ENCODE measurements at regions of chr17 and their contacts with region 1.

Region 1: DNA sequence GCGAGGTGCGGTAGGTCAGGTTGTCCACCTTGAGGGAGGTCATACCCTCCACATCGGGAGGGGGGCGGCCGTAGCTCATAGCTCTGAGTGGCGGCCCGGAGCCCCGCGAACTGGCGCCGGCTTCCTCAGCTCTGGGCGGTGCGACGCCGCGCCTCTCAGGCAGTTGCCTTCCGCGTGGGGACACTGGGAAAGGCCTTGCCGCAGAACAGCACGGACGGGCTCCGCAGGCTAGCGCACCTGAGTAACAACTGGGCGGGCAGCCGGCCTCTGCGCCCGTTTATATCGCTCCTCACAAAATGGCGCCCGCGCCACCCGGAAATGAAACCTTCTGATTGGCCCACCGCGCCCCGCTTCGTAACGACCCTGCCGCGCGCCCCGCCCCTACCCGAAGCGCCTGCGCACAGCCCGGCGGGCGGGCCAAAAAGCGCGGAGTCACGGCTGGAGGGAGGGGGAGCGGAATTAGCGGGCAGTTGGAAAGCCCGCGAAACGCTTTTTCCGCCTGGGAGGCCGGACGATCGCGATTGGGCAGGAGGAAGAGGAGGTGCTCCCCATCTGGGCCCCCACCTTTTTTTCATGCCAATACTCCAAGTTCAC is at the start of gene SRSF2:
- DNase-seq: peak; percentile 95 to 99 (median 98)
- ATAC-seq: peak; percentile 64
- H3K4me3 ChIP-seq: peak within 1 kb of the TSS; percentile 96
- H3K4me3 Mint-ChIP-seq: peak within 1 kb of the TSS; percentile 96
- H3K27ac ChIP-seq: peak within 1 kb of the TSS; percentile 99
- H3K27ac Mint-ChIP-seq: peak within 1 kb of the TSS; percentile 96
- H3K4me1 ChIP-seq: peaks cover 37% of the 10 kb centered on the region
- H3K4me1 Mint-ChIP-seq: peaks cover 60% of the 10 kb centered on the region
- H3K27me3 ChIP-seq: no peaks in the 10 kb centered on the region
- H3K27me3 Mint-ChIP-seq: no peaks in the 10 kb centered on the region
- CTCF ChIP-seq: no peak
- total RNA-seq, gene SRSF2: 448 to 460 TPM

Region 2: DNA sequence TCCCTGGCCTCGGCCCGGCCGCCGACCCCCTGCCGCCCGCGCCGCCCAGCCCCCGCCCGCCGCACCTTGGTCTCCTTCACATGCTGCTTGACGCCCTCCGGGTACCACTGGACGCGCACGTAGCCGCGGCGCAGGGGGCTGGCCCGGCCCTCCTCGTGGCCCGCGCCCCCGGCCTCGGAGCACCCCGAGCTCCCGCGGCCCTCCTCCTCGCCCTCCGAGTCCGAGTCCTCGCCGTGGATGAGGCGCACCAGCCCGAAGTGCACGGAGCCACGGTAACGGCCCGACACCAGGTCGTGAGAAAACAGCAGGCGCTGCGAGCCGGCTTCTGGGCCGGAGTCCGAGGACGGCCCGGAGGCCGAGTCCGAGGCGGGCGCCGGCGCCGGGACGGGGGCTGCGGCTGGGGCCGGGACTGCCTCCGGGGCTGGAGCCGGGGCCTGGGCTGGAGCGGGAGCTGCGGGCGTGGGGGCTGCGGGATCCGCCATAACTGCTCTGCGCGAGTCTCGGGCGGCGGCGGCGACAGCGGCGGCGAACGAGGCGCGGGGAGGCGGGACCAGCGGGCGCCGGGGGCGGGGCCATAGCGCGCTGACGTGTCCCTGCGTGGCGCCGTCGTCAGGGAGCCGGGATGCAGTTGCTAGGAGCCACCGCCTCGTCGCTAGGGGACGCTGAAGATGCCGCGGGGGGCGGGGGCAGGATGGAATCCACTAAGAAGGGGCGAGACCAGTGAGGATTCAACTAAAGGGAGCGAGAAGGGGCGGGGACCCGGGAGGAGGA is 284.3 kb before region 1 on chr17 and contains the start of gene UBE2O:
- CTCF ChIA-PET with region 1: no interaction called
- POLR2A ChIA-PET with region 1: interaction called, 3 read pairs
- intact Hi-C with region 1: loop called in 1 of 2 experiments (anchors 10 kb)
- DNase-seq: peak; percentile 82 to 97 (median 92)
- ATAC-seq: peak; percentile 90
- H3K4me3 ChIP-seq: peak within 1 kb of the TSS; percentile 69
- H3K4me3 Mint-ChIP-seq: peak within 1 kb of the TSS; percentile 79
- H3K27ac ChIP-seq: peak within 1 kb of the TSS; percentile 50 to 65
- H3K27ac Mint-ChIP-seq: peak within 1 kb of the TSS; percentile 82
- H3K4me1 ChIP-seq: peaks cover 30% of the 10 kb centered on the region
- H3K4me1 Mint-ChIP-seq: peaks cover 45% of the 10 kb centered on the region
- H3K27me3 ChIP-seq: no peaks in the 10 kb centered on the region
- H3K27me3 Mint-ChIP-seq: no peaks in the 10 kb centered on the region
- CTCF ChIP-seq: peak; percentile 47
- total RNA-seq, gene UBE2O: 22.7 to 25.1 TPM

Region 3: GRCh38 chr17:76714822-76715495 is 22.2 kb before region 1 on chr17:
- CTCF ChIA-PET with region 1: interaction called, 4 read pairs
- POLR2A ChIA-PET with region 1: interaction called, 63 read pairs
- intact Hi-C with region 1: loop called in 1 of 2 experiments (anchors 1 kb)
- DNase-seq: peak; percentile 64 to 87 (median 79)
- ATAC-seq: no peak
- H3K4me3 ChIP-seq: no peak overlapping the region
- H3K4me3 Mint-ChIP-seq: peak overlapping the region; percentile 3
- H3K27ac ChIP-seq: no peak overlapping the region
- H3K27ac Mint-ChIP-seq: peak overlapping the region; percentile 96
- H3K4me1 ChIP-seq: peaks cover 33% of the 10 kb centered on the region
- H3K4me1 Mint-ChIP-seq: peaks cover 42% of the 10 kb centered on the region
- H3K27me3 ChIP-seq: no peaks in the 10 kb centered on the region
- H3K27me3 Mint-ChIP-seq: no peaks in the 10 kb centered on the region
- CTCF ChIP-seq: peak; percentile 88

Region 4: DNA sequence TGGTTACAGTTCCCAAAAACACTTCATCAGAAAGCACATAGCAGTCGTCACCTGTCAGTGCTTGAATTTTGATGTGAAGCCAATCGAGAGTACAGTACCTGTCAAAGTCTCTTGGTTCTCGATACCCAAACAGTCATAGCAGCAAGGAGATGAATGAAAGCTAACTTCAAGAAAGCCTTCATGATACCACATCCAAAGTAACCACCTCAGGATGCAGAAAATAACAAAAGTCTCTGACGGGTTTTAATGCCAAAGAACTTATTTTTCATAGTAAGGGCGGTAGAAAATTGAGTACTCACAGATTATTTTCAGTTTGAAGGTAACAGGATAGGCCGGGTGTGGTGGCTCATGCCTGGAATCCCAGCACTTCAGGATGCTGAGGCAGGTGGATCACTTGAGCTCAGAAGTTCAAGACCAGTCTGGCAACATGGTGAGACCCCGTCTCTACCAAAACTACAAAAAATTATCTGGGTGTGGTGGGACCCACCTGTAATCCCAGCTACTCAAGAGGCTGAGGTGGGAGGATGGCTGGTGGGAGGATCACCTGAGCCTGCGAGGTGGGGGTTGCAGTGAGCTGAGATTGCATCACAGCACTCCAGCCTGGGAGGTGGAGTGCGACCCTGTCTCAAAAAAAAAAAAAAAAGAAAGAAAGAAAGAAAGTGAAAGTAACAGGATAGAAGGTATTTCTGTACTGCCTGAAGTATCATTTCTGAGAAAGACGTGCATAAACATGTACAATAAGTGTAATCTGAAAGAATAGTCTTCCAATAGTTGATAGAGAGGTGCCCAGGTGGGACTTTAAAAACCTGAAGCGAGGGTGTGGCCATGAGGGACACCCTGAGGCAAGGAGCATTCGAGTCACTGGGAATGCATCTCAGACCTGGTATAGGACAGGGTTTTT is 16.1 kb after region 1 on chr17:
- CTCF ChIA-PET with region 1: interaction called, 10 read pairs
- POLR2A ChIA-PET with region 1: interaction called, 76 read pairs
- intact Hi-C with region 1: loop called (anchors 1 to 2 kb)
- DNase-seq: peak in 10 of 14 experiments; percentile 14 to 81 (median 30)
- ATAC-seq: peak; percentile 87
- H3K4me3 ChIP-seq: peak overlapping the region; percentile 54
- H3K4me3 Mint-ChIP-seq: peak overlapping the region; percentile 84
- H3K27ac ChIP-seq: peak overlapping the region; percentile 82 to 84
- H3K27ac Mint-ChIP-seq: peak overlapping the region; percentile 96
- H3K4me1 ChIP-seq: peaks cover 34% of the 10 kb centered on the region
- H3K4me1 Mint-ChIP-seq: peaks cover 24% of the 10 kb centered on the region
- H3K27me3 ChIP-seq: no peaks in the 10 kb centered on the region
- H3K27me3 Mint-ChIP-seq: no peaks in the 10 kb centered on the region
- CTCF ChIP-seq: no peak

Region 5: DNA sequence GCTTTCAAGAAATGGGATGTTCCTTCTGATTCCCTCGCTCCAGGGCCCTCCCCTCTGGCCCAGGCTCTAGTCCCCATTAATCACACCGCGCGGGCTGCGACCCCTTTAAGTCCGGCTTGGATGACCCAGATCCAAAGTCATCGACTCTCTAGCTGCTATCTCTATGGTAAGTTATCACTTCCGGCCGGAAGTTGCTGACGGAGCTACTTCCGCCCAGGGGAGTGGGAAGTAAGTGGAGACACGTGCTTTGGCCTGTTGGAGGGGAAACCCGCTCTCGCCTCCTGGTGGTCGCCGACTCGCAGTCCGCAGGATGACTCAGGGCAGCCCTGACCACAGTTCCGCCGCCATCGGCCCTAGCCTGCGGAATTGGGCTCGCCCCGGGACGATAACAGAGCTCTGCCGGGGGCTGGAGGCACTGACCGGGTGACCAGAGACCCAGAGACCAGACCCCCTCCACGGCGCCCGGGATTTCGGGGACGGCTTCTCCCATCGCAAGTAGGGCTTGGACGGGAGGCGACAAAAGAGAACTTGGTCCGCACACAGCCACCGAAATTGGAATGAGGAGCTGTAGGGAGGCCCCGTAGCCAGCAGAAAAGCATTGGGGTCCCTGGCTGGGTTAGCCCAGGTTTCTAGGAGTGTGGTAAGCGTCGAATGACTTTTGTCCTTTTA is 351.4 kb after region 1 on chr17:
- CTCF ChIA-PET with region 1: no interaction called
- POLR2A ChIA-PET with region 1: interaction called, 10 read pairs
- intact Hi-C with region 1: no loop called
- DNase-seq: peak; percentile 68 to 95 (median 80)
- ATAC-seq: peak; percentile 87
- H3K4me3 ChIP-seq: peak overlapping the region; percentile 98
- H3K4me3 Mint-ChIP-seq: peak overlapping the region; percentile 99
- H3K27ac ChIP-seq: peak overlapping the region; percentile 70 to 95
- H3K27ac Mint-ChIP-seq: peak overlapping the region; percentile 95
- H3K4me1 ChIP-seq: peaks cover 49% of the 10 kb centered on the region
- H3K4me1 Mint-ChIP-seq: peaks cover 44% of the 10 kb centered on the region
- H3K27me3 ChIP-seq: no peaks in the 10 kb centered on the region
- H3K27me3 Mint-ChIP-seq: no peaks in the 10 kb centered on the region
- CTCF ChIP-seq: peak; percentile 57

Measured in CD4-positive, alpha-beta T cell (primary cell).